ENCODE measurements at regions of chr7 and their contacts with region 1.

Region 1: DNA sequence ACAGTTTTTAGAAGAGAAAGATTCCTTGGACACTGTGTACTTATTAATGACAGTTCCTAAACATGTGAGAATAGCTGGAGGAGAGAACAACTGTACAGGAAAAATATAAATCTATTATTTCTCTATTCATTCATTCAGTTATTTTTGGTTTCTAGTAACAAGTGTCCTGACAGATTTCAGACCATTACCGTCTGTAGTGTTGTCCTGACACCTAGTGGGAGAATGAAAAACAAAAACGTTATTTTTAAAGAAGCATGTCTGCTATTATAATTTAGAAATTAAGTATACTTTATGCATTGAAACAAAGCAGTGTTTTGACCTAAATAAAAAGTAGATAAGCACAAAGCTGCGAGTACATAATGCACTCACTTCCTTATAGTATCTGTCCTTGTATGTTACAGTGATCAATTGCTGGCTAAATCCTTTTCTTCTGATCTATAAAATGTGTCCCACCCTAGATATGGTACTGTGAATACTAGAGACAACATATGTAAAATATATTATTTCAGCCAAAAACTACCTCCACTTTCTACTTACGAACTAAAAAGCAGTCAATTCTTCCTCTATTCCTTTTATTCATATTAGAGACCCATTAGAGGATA is 575.6 kb downstream of the ARL4A start:
- DNase-seq: no peak
- H3K4me3 ChIP-seq: no peak overlapping the region
- CTCF ChIP-seq: peak; percentile 8

Region 2: GRCh38 chr7:12638851-12639467 is 624.1 kb before region 1 on chr7:
- CTCF ChIA-PET with region 1: interaction called, 14 read pairs
- POLR2A ChIA-PET with region 1: no interaction called
- DNase-seq: no peak
- H3K4me3 ChIP-seq: no peak overlapping the region
- CTCF ChIP-seq: peak; percentile 24

Region 3: GRCh38 chr7:13139436-13139835 is 123.6 kb before region 1 on chr7:
- CTCF ChIA-PET with region 1: no interaction called
- POLR2A ChIA-PET with region 1: no interaction called
- DNase-seq: no peak
- H3K4me3 ChIP-seq: no peak overlapping the region
- CTCF ChIP-seq: no peak

Measured in AG04449 (cell line).